Psoas muscle (tissue), 8 donors: ENCODE measurements at regions of chr6 and their contacts with region 1.

Region 1: DNA sequence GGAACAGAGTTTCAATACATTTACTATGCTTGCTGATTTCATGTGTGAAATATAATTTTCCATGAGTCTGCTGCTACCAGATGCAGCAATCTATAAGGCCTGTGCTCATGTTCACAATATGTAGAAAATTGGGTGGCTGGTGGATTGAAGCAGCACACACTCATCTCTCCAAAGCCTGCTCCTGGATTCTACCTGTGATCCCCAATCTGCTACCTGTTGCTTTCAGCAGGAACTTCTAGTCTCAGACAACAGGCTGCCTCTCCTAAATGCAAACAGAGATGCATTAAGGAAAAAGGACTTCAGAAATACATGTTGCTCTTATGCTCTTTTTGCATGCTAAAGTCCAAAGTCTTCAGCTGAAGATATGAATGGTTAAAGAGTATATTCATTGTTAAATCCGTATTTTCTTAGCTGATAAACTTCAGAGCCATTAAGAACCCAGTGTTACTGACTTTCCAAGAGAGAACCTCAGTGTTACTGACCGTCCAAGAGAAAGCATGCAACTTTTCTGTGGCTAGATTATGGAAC is 30.9 kb upstream of the MCM9 start:
- DNase-seq: no peak
- ATAC-seq: no peak
- H3K4me3 ChIP-seq: no peak overlapping the region
- H3K27ac ChIP-seq: no peak overlapping the region
- H3K4me1 ChIP-seq: no peaks in the 10 kb centered on the region
- H3K27me3 ChIP-seq: no peaks in the 10 kb centered on the region
- CTCF ChIP-seq: no peak

Region 2: GRCh38 chr6:119110601-119111548 is 145.0 kb after region 1 on chr6:
- intact Hi-C with region 1: loop called (anchors 2 kb)
- DNase-seq: no peak
- ATAC-seq: peak; percentile 49 to 85 (median 68)
- H3K4me3 ChIP-seq: no peak overlapping the region
- H3K27ac ChIP-seq: no peak overlapping the region
- H3K4me1 ChIP-seq: peaks cover 2% of the 10 kb centered on the region
- H3K27me3 ChIP-seq: no peaks in the 10 kb centered on the region
- CTCF ChIP-seq: peak; percentile 71